WTC11 (cell line): ENCODE measurements at regions of chr1 and their contacts with region 1.

Region 1: DNA sequence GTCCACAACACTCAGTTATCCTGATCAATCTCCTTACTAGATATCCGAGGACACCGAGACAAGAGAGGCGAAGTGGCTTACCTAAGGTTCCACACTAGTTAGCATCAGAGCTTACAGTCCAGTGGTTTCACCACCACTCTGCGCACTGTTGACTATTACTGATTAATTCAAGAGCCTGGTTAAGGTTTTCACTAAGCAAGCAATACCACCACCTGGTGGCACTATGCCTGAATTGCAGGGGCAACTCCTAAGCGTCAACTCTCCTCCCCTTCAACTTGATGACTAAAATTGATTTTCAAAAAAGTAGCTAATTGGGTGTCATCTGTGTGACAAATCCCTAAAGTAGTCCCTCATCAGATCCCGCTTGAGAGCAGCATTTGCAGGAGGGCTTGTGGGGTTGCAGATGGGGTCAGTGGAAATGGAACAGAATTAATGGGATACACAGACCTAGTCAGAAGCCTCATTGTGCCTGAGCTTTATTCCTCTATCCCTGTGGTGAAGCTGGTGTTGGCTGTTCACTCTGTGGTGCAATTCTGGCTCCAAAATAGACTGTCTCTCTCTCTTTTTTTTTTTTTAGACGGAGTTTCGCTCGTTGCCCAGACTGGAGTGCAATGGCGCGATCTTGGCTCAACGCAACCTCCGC is 9.1 kb downstream of the TTC22 start:
- DNase-seq: peak; percentile 88
- ATAC-seq: peak; percentile 47
- H3K4me3 Mint-ChIP-seq: no peak overlapping the region
- H3K27ac Mint-ChIP-seq: no peak overlapping the region
- H3K4me1 Mint-ChIP-seq: peaks cover 38% of the 10 kb centered on the region
- H3K27me3 Mint-ChIP-seq: peaks cover 3% of the 10 kb centered on the region; the same call in 1 of the 2 replicates
- CTCF ChIP-seq: peak; percentile 91

Region 2: DNA sequence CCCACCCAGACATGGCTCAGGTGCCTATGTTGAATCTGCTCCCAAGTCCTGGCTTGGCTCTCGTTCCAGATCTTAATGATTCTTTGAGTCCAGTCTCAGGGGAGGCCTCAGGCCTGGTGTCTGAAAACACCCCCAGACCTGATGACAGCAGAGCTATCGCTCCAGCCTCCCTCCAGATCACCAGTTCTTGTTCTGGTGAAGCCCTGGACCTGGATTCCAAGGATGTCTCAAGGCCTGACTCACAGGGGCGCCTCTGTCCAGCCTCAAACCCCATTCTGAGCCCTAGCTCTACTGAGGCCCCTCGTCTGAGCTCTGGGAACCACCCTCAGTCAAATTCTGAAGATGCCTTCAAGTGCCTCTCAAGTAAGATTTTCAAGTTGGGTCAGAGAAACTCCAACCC is 139.0 kb before region 1 on chr1:
- CTCF ChIA-PET with region 1: no interaction called
- POLR2A ChIA-PET with region 1: no interaction called
- DNase-seq: no peak
- ATAC-seq: no peak
- H3K4me3 Mint-ChIP-seq: no peak overlapping the region
- H3K27ac Mint-ChIP-seq: no peak overlapping the region
- H3K4me1 Mint-ChIP-seq: peaks cover 3% of the 10 kb centered on the region
- H3K27me3 Mint-ChIP-seq: peaks cover 3% of the 10 kb centered on the region
- CTCF ChIP-seq: no peak

Region 3: GRCh38 chr1:54671985-54672608 is 119.9 kb before region 1 on chr1:
- CTCF ChIA-PET with region 1: interaction called, 12 read pairs
- POLR2A ChIA-PET with region 1: no interaction called
- DNase-seq: peak; percentile 86
- ATAC-seq: peak; percentile 95
- H3K4me3 Mint-ChIP-seq: no peak overlapping the region
- H3K27ac Mint-ChIP-seq: no peak overlapping the region
- H3K4me1 Mint-ChIP-seq: no peaks in the 10 kb centered on the region
- H3K27me3 Mint-ChIP-seq: no peaks in the 10 kb centered on the region; the same call in 1 of the 2 replicates
- CTCF ChIP-seq: peak; percentile 87

Region 4: GRCh38 chr1:54715493-54716298 is 76.3 kb before region 1 on chr1 and contains the start of gene TTC4:
- CTCF ChIA-PET with region 1: interaction called, 10 read pairs
- POLR2A ChIA-PET with region 1: no interaction called
- DNase-seq: peak; percentile 85
- ATAC-seq: peak; percentile 96
- H3K4me3 Mint-ChIP-seq: peak within 1 kb of the TSS; percentile 92
- H3K27ac Mint-ChIP-seq: peak within 1 kb of the TSS; percentile 84
- H3K4me1 Mint-ChIP-seq: peaks cover 14% of the 10 kb centered on the region
- H3K27me3 Mint-ChIP-seq: peaks cover 22% of the 10 kb centered on the region
- CTCF ChIP-seq: no peak
- total RNA-seq, gene TTC4: 18.8 to 21.6 TPM (median 21.4 TPM) in 3 replicates

Region 5: DNA sequence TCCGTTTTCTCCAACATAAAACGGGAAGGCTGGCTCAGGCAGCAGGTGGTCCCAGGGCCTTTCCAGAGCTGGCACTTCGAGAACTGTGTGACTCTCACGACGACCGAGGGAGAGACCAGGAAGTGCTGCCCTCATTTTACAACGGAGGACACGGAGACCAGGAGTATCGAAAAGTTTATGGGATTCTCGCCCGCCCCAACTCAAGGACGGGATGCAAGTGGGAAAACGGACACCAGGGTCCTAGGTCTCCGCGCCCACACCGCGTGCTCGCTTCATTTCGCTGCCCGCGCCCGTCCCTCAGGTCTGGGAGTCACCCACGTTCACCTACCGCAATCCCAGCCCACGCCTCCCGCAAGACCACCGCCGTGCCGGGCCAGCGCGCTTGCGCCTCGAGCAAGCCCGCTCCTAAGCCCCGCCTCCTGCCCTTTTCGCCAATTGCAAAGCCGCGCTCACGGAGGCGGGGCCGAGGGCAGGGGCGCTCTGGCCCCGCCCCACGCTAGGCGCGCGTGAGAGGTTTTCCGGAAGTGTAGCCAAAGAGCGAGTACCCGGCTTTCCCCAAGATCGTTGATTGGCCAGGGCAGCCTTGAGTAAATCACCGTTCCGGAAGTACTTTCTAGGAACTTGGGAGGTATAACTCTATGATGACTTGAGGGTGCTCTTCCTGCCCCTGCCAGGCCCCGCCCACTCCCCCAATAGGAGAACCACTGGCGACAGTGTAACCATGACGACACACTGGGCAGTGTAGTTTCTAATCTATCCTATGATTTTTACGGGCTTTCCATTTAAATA is 27.7 kb before region 1 on chr1 and contains the start of gene PARS2:
- CTCF ChIA-PET with region 1: interaction called, 11 read pairs
- POLR2A ChIA-PET with region 1: no interaction called
- DNase-seq: peak; percentile 96
- ATAC-seq: peak; percentile 96
- H3K4me3 Mint-ChIP-seq: peak within 1 kb of the TSS; percentile 94
- H3K27ac Mint-ChIP-seq: peak within 1 kb of the TSS; percentile 92
- H3K4me1 Mint-ChIP-seq: peaks cover 22% of the 10 kb centered on the region
- H3K27me3 Mint-ChIP-seq: no peaks in the 10 kb centered on the region; the same call in 1 of the 2 replicates
- CTCF ChIP-seq: no peak
- total RNA-seq, gene PARS2: 11.5 to 12.1 TPM (median 12.1 TPM) in 3 replicates

Region 6: DNA sequence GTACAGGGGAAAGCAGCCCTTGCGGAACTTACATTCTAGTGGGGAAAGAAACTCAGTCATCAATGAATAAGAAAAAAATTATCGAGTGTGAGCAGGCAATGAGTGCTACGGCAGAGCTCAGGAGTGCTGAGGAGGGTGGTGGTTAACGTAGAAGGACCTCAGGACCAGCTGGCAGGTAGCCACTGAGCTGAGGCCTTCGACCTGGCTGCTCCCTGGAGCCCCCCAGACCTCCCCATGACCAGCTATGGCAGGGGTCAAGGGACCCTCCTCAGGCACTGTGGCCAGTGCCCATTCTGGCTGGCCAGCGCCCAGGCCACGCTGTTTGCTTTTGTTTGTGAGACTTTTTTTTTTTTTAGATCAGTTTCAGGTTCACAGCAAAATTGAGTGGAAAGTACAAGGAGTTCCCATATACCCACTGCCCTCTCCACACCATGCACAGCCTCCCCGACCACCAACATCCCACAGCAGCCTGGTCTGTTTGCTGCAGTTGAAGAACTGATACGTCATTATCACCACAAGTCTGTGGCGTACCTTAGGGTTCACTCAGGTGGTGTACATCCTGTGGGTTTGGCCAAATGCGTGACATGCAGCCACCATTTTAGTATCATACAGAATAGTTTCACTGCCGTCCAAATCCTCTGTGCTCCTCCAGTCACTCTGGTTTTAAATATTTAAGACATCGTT is 20.9 kb after region 1 on chr1:
- CTCF ChIA-PET with region 1: interaction called, 12 read pairs
- POLR2A ChIA-PET with region 1: no interaction called
- DNase-seq: no peak
- ATAC-seq: no peak
- H3K4me3 Mint-ChIP-seq: peak overlapping the region; percentile 29
- H3K27ac Mint-ChIP-seq: no peak overlapping the region
- H3K4me1 Mint-ChIP-seq: peaks cover 27% of the 10 kb centered on the region
- H3K27me3 Mint-ChIP-seq: peaks cover 7% of the 10 kb centered on the region; the same call in 1 of the 2 replicates
- CTCF ChIP-seq: no peak